Aorta (tissue), 5 donors: ENCODE measurements at regions of chr5 and their contacts with region 1.

Region 1: GRCh38 chr5:39209924-39210323 is 9.4 kb downstream of the FYB1 start:
- DNase-seq: peak in 1 of 2 donors; percentile 55
- ATAC-seq: no peak
- H3K4me3 ChIP-seq: no peak overlapping the region
- H3K27ac ChIP-seq: no peak overlapping the region
- H3K4me1 ChIP-seq: no peaks in the 10 kb centered on the region
- H3K27me3 ChIP-seq: no peaks in the 10 kb centered on the region

Region 2: GRCh38 chr5:38776149-38776896 is 433.6 kb before region 1 on chr5:
- intact Hi-C with region 1: no loop called
- DNase-seq: no peak
- ATAC-seq: no peak
- H3K4me3 ChIP-seq: no peak overlapping the region
- H3K27ac ChIP-seq: no peak overlapping the region
- H3K4me1 ChIP-seq: no peaks in the 10 kb centered on the region
- H3K27me3 ChIP-seq: no peaks in the 10 kb centered on the region

Region 3: DNA sequence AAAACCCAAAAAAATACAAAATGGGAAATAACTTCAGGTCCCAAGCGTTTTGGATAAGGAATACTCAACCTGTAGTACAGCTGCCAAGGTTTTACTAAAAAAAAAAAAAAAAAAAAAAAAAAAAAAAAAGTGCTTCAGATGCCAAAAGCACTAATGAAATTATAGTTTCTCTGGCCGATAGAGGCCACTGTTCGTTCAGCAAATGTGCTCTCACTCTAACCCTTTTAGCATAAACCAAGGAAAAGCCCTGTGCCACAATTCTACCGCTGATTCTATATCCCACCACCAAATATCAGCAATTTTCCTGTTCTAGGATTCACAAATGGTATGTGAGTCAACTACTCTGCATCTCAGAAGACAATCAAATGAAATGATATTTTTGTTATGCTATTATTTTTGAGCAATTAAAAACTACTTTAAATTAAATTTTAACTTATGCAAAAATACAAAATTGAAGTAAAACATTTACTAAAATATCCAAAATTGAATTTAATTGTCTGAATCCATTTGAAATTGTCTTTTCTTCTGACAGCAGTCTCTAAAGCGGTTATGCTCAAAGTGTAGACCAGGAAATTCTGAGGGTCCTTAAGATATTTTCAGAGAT is 215.5 kb before region 1 on chr5:
- intact Hi-C with region 1: loop called in 1 of 2 experiments (anchors 10 kb)
- DNase-seq: no peak
- ATAC-seq: peak; percentile 57
- H3K4me3 ChIP-seq: no peak overlapping the region
- H3K27ac ChIP-seq: no peak overlapping the region
- H3K4me1 ChIP-seq: no peaks in the 10 kb centered on the region
- H3K27me3 ChIP-seq: no peaks in the 10 kb centered on the region

Region 4: DNA sequence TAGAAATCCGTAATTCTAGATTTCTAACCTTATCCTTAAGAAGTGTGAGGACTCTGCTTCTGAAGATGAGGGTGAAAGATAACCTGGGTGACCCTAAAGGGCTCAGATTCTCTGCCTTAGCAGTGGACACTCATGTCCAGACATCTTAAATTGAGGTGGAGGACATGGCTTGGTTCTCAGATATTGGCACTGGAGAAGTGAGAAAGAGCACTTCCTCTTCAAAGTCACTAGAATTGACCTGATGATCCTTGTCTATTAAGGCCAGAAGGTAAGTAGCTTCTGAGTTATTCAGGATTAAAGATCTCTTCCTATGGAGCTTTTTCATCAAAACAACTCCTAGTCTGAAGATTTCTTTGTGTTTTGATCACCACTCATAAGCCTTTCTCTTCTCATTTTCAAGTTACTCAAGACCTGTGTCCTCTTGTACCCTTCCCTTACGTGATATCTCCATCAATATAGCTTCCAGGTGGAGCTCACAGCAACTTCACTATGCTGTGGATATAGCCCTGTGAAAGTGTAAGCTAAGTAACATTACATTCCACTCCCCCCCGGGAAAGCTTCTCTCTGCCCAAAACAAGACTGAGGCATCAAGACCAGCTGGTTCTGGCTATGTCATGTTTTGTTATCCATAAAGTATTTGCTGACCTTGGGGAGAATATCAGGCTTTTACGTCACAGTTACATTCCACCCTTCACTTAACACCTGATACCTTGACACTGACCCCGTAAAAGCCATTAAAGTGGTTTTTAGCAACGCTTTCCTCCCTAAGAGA is 99.8 kb after region 1 on chr5:
- intact Hi-C with region 1: no loop called
- DNase-seq: no peak
- ATAC-seq: no peak
- H3K4me3 ChIP-seq: no peak overlapping the region
- H3K27ac ChIP-seq: no peak overlapping the region
- H3K4me1 ChIP-seq: no peaks in the 10 kb centered on the region
- H3K27me3 ChIP-seq: no peaks in the 10 kb centered on the region

Region 5: DNA sequence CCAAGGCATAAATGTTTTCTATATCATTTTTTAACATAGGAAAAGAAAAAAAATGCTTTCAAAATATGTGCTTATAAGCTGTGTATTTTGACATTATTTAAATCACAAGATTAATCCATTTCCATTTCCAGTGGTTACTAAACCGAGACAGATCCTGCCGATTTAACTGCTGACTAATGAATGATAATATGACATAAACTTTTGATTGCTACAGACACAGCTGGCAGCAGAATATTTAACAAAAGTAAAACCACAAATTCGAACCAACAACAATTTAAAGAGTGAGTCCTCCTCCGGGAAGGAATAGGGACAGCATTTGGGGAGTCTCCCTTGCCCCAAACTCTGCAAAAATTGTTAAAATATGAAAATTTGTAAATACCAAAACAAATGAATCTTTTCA is 616.1 kb after region 1 on chr5:
- intact Hi-C with region 1: no loop called
- DNase-seq: no peak
- ATAC-seq: no peak
- H3K4me3 ChIP-seq: no peak overlapping the region
- H3K27ac ChIP-seq: no peak overlapping the region
- H3K4me1 ChIP-seq: no peaks in the 10 kb centered on the region
- H3K27me3 ChIP-seq: peaks cover 0 to 1% of the 10 kb centered on the region in 2 donors